ENCODE measurements at regions of chr16 and their contacts with region 1.

Region 1: GRCh38 chr16:61149709-61150108 is 886.5 kb downstream of the CDH8 start:
- DNase-seq: no peak
- ATAC-seq: no peak
- H3K4me3 ChIP-seq: no peak overlapping the region
- H3K27ac ChIP-seq: no peak overlapping the region
- H3K4me1 ChIP-seq: no peaks in the 10 kb centered on the region
- H3K27me3 ChIP-seq: no peaks in the 10 kb centered on the region
- CTCF ChIP-seq: no peak

Region 2: DNA sequence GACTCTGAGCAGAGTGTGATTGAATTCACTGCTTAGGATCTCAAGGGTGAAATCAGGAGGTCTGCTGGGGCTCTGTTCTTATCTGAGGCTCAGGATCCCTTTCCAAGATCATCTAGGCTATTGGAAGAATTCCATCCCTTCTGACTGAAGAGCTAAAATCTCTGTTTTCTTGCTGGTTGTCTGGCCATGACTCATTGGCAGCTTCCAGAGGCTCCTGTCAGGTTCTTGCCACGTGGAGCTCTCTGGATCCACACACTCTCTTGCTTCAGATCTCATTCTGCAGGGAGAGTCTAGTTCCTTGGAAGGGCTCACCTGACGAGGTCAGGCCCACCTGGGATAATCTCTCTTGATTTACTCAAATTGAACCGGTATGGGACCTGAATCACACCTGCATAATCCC is 44.2 kb before region 1 on chr16:
- intact Hi-C with region 1: no loop called
- DNase-seq: no peak
- ATAC-seq: no peak
- H3K4me3 ChIP-seq: no peak overlapping the region
- H3K27ac ChIP-seq: no peak overlapping the region
- H3K4me1 ChIP-seq: no peaks in the 10 kb centered on the region
- H3K27me3 ChIP-seq: no peaks in the 10 kb centered on the region
- CTCF ChIP-seq: no peak

Region 3: GRCh38 chr16:61419791-61420190 is 270.1 kb after region 1 on chr16:
- intact Hi-C with region 1: loop called in 1 of 2 experiments (anchors 5 kb)
- DNase-seq: no peak
- ATAC-seq: no peak
- H3K4me3 ChIP-seq: no peak overlapping the region
- H3K27ac ChIP-seq: no peak overlapping the region
- H3K4me1 ChIP-seq: no peaks in the 10 kb centered on the region
- H3K27me3 ChIP-seq: no peaks in the 10 kb centered on the region
- CTCF ChIP-seq: no peak